Activated CD4-positive, alpha-beta memory T cell treated with anti-CD3 and anti-CD28 coated beads for 36 hours (primary cell): ENCODE measurements at regions of chr13 and their contacts with region 1.

Region 1: GRCh38 chr13:43786773-43787517 is at the start of gene ENOX1:
- DNase-seq: peak; percentile 46
- H3K4me3 Mint-ChIP-seq: peak within 1 kb of the TSS; percentile 75
- H3K27ac Mint-ChIP-seq: no peak within 1 kb of the TSS
- H3K4me1 Mint-ChIP-seq: peaks cover 13% of the 10 kb centered on the region
- H3K27me3 Mint-ChIP-seq: peaks cover 37% of the 10 kb centered on the region
- total RNA-seq, gene ENOX1: 0.44 to 0.45 TPM

Region 2: DNA sequence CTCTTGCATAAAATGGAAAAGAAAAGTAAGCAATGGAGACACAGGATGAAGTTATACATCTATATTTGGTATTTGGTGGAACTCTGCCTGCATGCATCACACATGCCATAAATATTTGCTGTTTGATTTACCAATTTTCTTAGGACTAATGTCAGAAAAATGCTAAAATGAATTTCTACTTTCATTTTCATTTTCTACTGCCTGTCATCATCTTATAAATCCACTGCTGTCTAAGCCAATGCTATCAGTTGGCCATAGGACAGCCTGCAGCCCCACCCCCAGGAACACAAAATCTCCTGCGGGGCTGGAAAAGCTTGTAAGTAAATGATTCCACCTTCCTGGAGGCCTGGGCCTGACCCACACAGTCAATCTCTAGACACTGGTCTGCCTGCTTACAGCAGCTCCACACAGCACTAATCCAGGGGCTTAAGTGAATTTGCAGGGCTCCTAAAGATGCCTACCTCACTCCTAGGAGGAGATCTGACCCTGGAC is 122.2 kb before region 1 on chr13:
- CTCF ChIA-PET with region 1: no interaction called
- POLR2A ChIA-PET with region 1: no interaction called
- intact Hi-C with region 1: loop called (anchors 10 kb)
- DNase-seq: peak; percentile 10
- H3K4me3 Mint-ChIP-seq: no peak overlapping the region
- H3K27ac Mint-ChIP-seq: no peak overlapping the region
- H3K4me1 Mint-ChIP-seq: peaks cover 10% of the 10 kb centered on the region
- H3K27me3 Mint-ChIP-seq: peaks cover 2% of the 10 kb centered on the region

Region 3: DNA sequence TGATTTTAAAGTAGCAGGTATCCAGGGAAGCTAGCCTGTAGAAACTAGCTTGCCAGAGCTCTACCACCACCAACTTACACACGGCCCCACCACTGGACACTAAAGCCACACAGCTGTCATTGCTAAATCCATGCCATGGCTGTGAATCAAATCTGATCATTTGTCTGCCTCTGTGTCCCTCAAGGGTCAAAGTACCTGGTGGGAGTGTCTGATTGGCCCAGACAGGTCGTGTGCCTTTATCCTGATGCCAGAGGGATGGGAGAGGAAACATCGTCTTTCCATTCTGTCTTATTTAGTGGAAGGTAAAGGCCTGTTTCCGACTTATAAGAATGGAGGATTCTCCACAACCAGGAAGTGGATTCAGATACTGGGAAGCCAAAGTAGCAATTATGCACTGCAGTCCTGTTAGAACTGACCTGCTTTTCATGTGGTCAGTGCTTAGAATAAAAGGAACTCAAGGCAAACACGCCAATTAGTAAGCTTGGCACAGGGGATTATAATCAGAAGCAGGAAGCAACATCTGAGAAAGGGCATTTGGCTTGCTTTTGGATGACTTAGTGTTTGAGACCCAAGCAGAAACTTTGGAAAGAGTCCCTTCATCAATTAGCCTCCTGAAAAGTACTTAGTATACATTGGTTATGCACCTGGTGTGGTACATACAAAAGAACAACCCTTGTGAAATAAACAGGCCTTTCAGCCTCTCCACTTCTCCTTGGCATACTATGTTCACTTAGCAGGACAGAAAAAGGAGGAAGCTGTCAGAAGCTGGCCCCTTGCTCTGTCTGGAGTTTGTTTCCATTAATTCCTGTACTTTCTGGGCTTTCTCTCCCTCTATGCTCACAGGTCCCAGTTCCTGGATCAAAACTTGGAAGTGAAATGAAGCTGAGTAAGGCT is 1009.9 kb after region 1 on chr13:
- CTCF ChIA-PET with region 1: no interaction called
- POLR2A ChIA-PET with region 1: no interaction called
- intact Hi-C with region 1: no loop called
- DNase-seq: no peak
- H3K4me3 Mint-ChIP-seq: no peak overlapping the region
- H3K27ac Mint-ChIP-seq: no peak overlapping the region
- H3K4me1 Mint-ChIP-seq: no peaks in the 10 kb centered on the region
- H3K27me3 Mint-ChIP-seq: peaks cover 2% of the 10 kb centered on the region